Activated naive CD4-positive, alpha-beta T cell treated with anti-CD3 and anti-CD28 coated beads for 36 hours (primary cell): ENCODE measurements at regions of chr6 and their contacts with region 1.

Region 1: DNA sequence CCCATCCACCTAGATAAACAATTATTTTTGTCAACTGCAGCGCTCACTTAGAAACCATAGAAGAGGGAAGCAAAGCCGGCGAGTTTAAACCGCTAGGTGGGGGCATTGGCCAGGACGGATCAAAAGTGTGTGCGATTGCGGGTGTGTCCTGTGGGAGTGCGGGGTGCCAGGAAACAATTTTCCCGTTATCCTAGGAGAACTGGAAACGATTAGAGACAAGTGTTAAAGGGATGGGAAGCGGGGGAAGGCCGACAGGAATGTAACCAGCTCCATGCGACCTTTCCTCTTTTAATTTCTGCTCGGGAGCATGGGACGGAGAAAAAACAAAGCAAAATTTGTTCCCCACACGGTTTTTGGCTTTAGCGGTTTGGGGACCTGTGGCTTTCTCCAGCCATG is 2.8 kb upstream of the HTR1B start:
- DNase-seq: peak; percentile 59
- H3K4me3 Mint-ChIP-seq: peak overlapping the region; percentile 87
- H3K27ac Mint-ChIP-seq: no peak overlapping the region
- H3K4me1 Mint-ChIP-seq: peaks cover 23% of the 10 kb centered on the region
- H3K27me3 Mint-ChIP-seq: peaks cover 59% of the 10 kb centered on the region

Region 2: DNA sequence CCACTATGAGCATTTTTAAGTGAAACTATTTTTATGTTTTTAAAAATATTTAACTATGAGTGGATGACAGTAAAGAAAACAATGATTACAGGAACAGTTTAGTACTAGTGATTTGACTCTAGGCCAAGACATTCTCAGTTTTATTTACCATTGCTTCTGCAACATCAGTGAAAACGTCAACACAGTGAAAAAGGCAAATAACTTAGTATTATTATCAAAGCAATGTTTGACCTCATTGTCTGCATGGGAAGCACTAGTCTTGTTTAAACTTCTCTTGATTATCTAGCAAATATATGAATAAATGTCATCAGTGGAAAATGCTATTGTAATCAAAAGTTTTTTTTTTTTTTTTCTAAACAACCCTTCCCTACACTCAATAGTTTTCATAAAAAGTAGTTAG is 167.8 kb before region 1 on chr6:
- CTCF ChIA-PET with region 1: no interaction called
- intact Hi-C with region 1: no loop called
- DNase-seq: no peak
- H3K4me3 Mint-ChIP-seq: no peak overlapping the region
- H3K27ac Mint-ChIP-seq: no peak overlapping the region
- H3K4me1 Mint-ChIP-seq: no peaks in the 10 kb centered on the region
- H3K27me3 Mint-ChIP-seq: no peaks in the 10 kb centered on the region

Region 3: DNA sequence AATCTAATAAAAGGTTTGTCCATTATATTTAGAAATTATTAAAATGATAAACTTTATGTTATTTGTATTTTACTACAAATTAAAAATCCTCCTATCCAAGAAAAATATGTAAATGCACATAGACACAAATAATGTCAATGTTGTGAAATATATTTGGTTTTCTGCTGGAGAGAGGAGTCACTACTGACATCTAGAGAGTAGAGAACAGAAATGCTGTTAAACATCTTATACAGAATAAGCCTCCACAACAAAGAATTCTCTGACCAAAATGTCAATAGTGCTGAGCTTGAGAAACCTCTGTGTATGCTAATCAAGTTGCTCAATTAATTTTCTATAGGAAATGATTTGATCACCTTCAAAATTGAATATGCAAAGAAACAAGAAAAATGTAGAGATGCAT is 15.1 kb before region 1 on chr6:
- CTCF ChIA-PET with region 1: no interaction called
- intact Hi-C with region 1: no loop called
- DNase-seq: no peak
- H3K4me3 Mint-ChIP-seq: no peak overlapping the region
- H3K27ac Mint-ChIP-seq: no peak overlapping the region
- H3K4me1 Mint-ChIP-seq: no peaks in the 10 kb centered on the region
- H3K27me3 Mint-ChIP-seq: no peaks in the 10 kb centered on the region

Region 4: GRCh38 chr6:78611958-78612357 is 1145.9 kb after region 1 on chr6:
- CTCF ChIA-PET with region 1: no interaction called
- intact Hi-C with region 1: loop called (anchors 10 kb)
- DNase-seq: no peak
- H3K4me3 Mint-ChIP-seq: no peak overlapping the region
- H3K27ac Mint-ChIP-seq: no peak overlapping the region
- H3K4me1 Mint-ChIP-seq: no peaks in the 10 kb centered on the region
- H3K27me3 Mint-ChIP-seq: peaks cover 3% of the 10 kb centered on the region

Region 5: GRCh38 chr6:78770766-78771165 is 1304.7 kb after region 1 on chr6:
- CTCF ChIA-PET with region 1: no interaction called
- intact Hi-C with region 1: loop called (anchors 5 kb)
- DNase-seq: no peak
- H3K4me3 Mint-ChIP-seq: no peak overlapping the region
- H3K27ac Mint-ChIP-seq: no peak overlapping the region
- H3K4me1 Mint-ChIP-seq: no peaks in the 10 kb centered on the region
- H3K27me3 Mint-ChIP-seq: peaks cover 2% of the 10 kb centered on the region

Region 6: DNA sequence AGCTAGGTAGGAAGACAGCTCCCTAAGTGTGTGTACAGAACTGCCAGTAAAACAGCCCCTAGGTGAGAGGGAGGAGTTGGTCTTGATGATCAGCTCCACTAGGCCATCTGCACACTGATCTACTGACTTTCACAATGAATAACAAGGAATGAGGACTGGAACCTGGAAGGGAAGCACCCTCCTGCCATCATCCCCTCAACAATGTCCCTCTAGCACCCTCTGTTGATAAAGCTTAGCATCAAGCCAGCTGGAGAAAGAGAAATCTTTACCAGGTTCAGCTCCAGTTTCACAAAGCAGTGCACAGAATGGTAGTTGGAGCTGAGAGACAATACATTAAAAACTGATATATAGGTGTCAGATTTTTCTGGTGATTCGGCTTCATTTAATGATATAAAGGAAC is 1344.1 kb after region 1 on chr6:
- CTCF ChIA-PET with region 1: no interaction called
- intact Hi-C with region 1: loop called (anchors 5 kb)
- DNase-seq: no peak
- H3K4me3 Mint-ChIP-seq: no peak overlapping the region
- H3K27ac Mint-ChIP-seq: no peak overlapping the region
- H3K4me1 Mint-ChIP-seq: no peaks in the 10 kb centered on the region
- H3K27me3 Mint-ChIP-seq: peaks cover 23% of the 10 kb centered on the region

Region 7: GRCh38 chr6:79246891-79247290 is 1780.8 kb after region 1 on chr6:
- CTCF ChIA-PET with region 1: no interaction called
- intact Hi-C with region 1: loop called (anchors 10 kb)
- DNase-seq: no peak
- H3K4me3 Mint-ChIP-seq: no peak overlapping the region
- H3K27ac Mint-ChIP-seq: no peak overlapping the region
- H3K4me1 Mint-ChIP-seq: no peaks in the 10 kb centered on the region
- H3K27me3 Mint-ChIP-seq: peaks cover 11% of the 10 kb centered on the region

Region 8: DNA sequence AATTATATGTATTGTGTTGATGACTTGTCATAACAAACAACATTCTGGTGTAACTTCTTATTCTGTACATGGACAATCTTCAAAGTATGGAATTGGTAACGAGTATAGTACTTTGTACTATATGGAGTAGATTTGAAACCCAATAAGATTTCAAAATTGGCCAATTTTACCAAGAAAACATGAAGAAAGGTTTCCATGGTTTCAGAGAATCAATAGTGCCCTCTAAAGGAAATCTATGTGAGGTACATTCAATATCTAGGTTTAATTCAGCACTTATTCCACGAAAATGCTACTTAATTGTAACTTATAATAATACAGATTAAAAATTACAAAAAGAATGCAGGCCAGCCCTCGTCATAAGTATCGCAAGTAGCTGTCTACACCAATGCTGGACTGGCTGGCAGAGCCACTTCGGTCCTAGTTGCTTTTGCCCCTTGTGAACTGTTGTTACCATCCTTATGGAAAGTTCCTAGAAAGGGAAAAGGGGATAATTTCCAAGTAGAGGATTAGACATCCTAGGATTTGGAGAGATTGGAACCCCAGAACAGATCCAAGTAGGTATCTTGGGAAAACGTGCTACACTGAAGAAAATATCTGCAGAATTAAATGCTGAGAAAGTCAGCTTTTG is 2000.3 kb after region 1 on chr6:
- CTCF ChIA-PET with region 1: no interaction called
- intact Hi-C with region 1: loop called (anchors 10 kb)
- DNase-seq: no peak
- H3K4me3 Mint-ChIP-seq: no peak overlapping the region
- H3K27ac Mint-ChIP-seq: no peak overlapping the region
- H3K4me1 Mint-ChIP-seq: no peaks in the 10 kb centered on the region
- H3K27me3 Mint-ChIP-seq: peaks cover 19% of the 10 kb centered on the region